MCF 10A (cell line): ENCODE measurements at regions of chr12 and their contacts with region 1.

Region 1: GRCh38 chr12:108850854-108851573 is 6.4 kb downstream of the SSH1 start:
- DNase-seq: no peak
- H3K4me3 Mint-ChIP-seq: no peak overlapping the region
- H3K27ac Mint-ChIP-seq: peak overlapping the region; percentile 16
- H3K4me1 Mint-ChIP-seq: peaks cover 19% of the 10 kb centered on the region
- H3K27me3 Mint-ChIP-seq: no peaks in the 10 kb centered on the region
- CTCF ChIP-seq: no peak

Region 2: GRCh38 chr12:108731105-108731865 is 119.7 kb before region 1 on chr12 and contains the start of gene CORO1C:
- CTCF ChIA-PET with region 1: interaction called, 4 read pairs
- POLR2A ChIA-PET with region 1: no interaction called
- intact Hi-C with region 1: loop called (anchors 5 kb)
- DNase-seq: peak; percentile 96
- H3K4me3 Mint-ChIP-seq: peak within 1 kb of the TSS; percentile 90
- H3K27ac Mint-ChIP-seq: peak within 1 kb of the TSS; percentile 87
- H3K4me1 Mint-ChIP-seq: peaks cover 42% of the 10 kb centered on the region
- H3K27me3 Mint-ChIP-seq: no peaks in the 10 kb centered on the region
- CTCF ChIP-seq: peak; percentile 68
- total RNA-seq, gene CORO1C: 130 and 141 TPM in 2 replicates